Stomach (tissue), 19 donors: ENCODE measurements at regions of chr4 and their contacts with region 1.

Region 1: DNA sequence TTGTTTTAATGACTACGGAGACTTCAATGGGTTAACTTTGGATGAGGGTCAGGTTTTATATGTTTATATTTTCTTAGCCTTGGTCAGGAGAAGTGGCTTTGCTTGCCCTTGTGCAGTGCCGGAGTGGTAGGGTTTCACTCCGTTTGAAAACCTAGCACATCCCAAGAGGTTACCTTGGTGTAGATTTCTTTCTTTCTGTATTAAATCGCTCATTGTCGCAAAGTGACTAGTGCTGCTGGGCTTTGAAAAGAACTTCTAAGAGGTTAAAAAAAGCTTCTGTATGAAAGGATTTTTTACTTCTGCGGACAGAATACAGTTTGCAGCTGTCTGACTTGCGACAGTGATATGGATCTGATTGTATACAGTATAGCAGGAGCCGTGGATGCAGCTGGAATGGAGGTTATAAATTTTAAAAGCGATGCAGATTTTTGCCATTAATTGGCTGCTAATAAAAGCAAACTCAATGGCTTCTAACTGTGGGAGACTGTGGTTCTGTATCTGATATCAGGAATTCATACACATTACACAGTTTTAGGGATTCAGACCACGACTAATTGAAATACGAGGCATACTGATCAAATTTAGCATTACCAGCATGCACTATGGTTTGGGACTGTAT is 340.9 kb upstream of the PITX2 start:
- DNase-seq: no peak
- H3K4me3 ChIP-seq: no peak overlapping the region
- H3K27ac ChIP-seq: no peak overlapping the region
- H3K4me1 ChIP-seq: no peaks in the 10 kb centered on the region
- H3K27me3 ChIP-seq: peaks cover 0 to 8% (median 6%) of the 10 kb centered on the region in 3 donors
- CTCF ChIP-seq: no peak
- EP300 ChIP-seq: no peak
- POLR2A ChIP-seq: no peak

Region 2: DNA sequence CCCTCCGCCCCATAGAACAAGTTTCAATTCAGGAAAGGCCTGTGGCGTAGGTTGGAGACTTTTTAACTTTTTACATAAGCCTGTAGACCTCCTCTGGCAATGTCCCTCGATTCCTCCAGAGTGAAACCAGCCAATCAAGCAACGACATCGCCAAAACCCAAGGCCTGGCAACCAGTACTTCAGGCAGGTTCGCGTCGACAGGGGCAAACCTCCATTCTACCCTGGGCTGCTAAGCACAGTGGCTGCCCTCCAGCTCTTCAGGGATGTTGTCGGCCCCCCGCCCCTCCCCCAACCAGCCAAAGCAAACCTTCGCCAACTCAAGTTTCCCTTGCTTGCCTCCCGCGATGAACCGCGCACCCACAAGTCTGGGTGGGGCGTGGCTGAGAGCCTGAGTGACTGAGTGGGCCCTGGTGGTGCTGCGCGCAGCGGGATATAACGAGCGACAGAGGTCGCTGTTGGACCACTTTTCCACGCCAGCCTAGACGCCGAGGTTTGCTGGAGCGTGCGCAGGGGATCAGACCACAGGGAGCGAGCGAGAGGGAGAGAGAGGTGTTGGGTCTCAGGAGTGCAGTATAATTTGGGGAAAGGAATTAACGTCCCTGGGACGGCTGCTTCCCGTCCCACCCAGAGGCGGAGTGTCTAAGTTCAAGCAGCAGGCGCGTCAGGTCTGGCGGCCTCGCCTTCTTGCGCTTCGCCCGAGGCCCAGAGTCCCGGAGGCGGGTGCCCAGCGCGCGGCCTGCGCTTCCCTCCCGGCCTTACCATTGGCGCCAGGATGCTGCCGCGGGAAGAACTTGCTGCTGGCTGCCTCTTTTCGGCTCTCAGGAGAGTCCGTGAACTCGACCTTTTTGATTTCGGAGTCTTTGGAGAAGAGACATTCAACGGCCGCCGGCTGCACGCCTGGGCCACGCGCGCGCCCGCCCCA is 331.9 kb before region 1 on chr4:
- intact Hi-C with region 1: loop called (anchors 5 kb)
- DNase-seq: peak; percentile 74 to 95
- H3K4me3 ChIP-seq: peak overlapping the region; percentile 29 to 53 (median 35)
- H3K27ac ChIP-seq: no peak overlapping the region
- H3K4me1 ChIP-seq: peaks cover 16 to 56% (median 43%) of the 10 kb centered on the region in 4 donors
- H3K27me3 ChIP-seq: peaks cover 37 to 100% (median 99%) of the 10 kb centered on the region in 3 donors
- CTCF ChIP-seq: peak in 5 of 7 experiments; percentile 44 to 78 (median 57)
- EP300 ChIP-seq: no peak
- POLR2A ChIP-seq: no peak